A549 (cell line): ENCODE measurements at regions of chr14 and their contacts with region 1.

Region 1: DNA sequence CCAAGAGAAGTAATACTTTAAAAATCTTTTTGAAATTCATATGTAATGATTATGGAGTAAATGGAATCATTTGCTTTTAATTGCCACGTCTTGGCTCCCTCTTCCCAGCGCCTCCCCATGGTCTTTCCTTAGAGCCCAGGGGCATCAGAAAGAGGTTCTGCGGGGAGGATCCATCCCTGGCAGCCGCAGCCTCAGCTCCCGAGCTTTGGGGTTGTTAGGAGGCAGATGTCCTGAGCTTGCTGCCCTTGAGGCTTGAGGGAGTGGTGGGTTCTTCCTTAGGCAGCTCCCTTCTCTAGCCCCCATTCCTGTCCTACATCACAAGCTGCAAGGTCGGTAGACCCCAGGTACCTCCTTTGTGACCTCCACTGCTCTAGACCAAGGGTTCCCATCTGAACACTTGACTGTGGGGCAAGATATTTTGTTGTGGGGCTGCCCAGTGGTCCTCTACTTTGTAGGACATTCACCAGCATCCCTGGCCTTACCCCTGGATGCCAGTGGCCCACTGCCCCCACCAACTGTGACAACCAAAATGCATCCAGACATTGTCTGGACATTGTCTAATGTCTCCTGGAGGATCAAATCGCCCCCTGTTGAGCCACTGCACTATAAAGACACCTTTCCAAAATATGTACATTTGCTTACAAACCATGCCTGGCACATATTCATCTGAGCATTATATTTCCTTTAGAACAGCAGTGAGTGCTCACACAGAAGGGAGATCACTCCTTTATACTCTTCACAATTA is 6.3 kb downstream of the PPP2R5C start:
- DNase-seq: no peak
- ATAC-seq: no peak
- H3K4me3 ChIP-seq: no peak overlapping the region
- H3K27ac ChIP-seq: no peak overlapping the region
- H3K4me1 ChIP-seq: no peaks in the 10 kb centered on the region; the same call in 2 of the 3 replicates
- CTCF ChIP-seq: no peak
- EP300 ChIP-seq: no peak
- POLR2A ChIP-seq: no peak
- RAD21 ChIP-seq: no peak

Region 2: DNA sequence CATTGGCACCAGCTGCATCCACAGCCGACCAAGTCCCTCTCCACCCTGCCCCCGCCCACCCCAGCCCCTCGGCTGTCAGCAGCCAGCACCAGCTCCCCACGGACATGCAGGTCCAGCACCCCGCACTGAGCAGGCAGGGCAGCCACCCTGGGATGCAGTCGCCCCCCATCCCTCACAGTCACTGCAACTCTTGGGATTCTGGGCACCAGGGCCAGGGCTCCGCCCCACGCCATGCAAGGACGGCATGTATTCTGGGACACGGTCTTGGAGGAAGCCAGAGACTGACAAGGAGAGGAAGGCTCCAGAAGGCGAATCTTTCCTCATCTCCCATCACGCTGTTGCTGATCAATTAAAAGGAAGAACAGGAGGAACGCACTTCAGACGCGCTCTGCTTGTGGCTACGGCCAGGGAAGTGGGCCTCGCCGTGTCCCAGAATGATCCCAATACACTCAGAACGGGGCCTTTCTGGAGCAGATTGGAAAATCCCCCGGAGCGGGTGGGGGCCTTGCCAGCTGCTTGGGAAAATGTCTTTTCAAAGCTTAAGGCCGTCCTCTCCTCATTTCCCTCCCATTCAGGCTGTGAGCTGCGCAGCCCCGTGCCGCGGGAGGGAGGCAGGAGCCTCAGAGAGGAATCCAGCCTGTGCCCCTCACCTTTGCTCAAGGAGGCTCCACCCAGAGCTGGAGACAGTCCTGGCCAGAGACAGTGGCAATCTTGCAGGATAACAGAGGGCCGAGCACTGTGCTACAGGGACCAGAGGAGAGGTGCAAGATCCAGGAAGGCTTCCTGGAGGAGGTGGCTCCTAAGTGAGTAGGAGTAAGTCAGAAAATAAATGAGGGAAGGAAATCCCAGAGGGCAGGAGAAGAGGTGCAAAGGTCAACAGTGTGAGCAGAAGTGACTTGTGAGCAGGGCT is 260.6 kb before region 1 on chr14:
- CTCF ChIA-PET with region 1: no interaction called
- POLR2A ChIA-PET with region 1: no interaction called
- DNase-seq: no peak
- ATAC-seq: no peak; a peak in 1 of 6 replicates
- H3K4me3 ChIP-seq: no peak overlapping the region
- H3K27ac ChIP-seq: peak overlapping the region in 1 of 2 experiments; percentile 46; a peak in 2 of 6 replicates
- H3K4me1 ChIP-seq: peaks cover 7% of the 10 kb centered on the region; the same call in 1 of the 3 replicates
- CTCF ChIP-seq: no peak
- EP300 ChIP-seq: no peak
- POLR2A ChIP-seq: no peak
- RAD21 ChIP-seq: no peak

Region 3: GRCh38 chr14:101584055-101584859 is 183.5 kb before region 1 on chr14:
- CTCF ChIA-PET with region 1: no interaction called
- POLR2A ChIA-PET with region 1: no interaction called
- DNase-seq: no peak
- ATAC-seq: no peak
- H3K4me3 ChIP-seq: no peak overlapping the region
- H3K27ac ChIP-seq: no peak overlapping the region
- H3K4me1 ChIP-seq: no peaks in the 10 kb centered on the region
- CTCF ChIP-seq: no peak
- EP300 ChIP-seq: no peak
- POLR2A ChIP-seq: no peak
- RAD21 ChIP-seq: no peak

Region 4: GRCh38 chr14:101654051-101654450 is 113.7 kb before region 1 on chr14:
- CTCF ChIA-PET with region 1: no interaction called
- POLR2A ChIA-PET with region 1: no interaction called
- DNase-seq: no peak
- ATAC-seq: no peak
- H3K4me3 ChIP-seq: no peak overlapping the region
- H3K27ac ChIP-seq: no peak overlapping the region
- H3K4me1 ChIP-seq: no peaks in the 10 kb centered on the region
- CTCF ChIP-seq: no peak
- EP300 ChIP-seq: no peak
- POLR2A ChIP-seq: no peak
- RAD21 ChIP-seq: no peak

Region 5: DNA sequence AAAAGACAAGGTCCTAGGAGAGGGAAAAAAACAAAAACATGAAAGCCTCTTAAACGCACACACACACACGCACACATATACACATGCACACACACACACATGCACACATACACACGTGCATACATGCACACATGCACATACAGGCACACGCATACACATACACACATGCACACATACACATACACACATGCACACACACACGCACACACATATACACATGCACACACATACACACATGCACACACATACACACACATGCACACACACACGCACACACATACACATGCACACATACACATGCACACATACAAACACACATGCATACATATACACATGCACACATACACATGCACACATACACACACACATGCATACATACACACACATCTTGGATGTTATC is 84.4 kb before region 1 on chr14:
- CTCF ChIA-PET with region 1: no interaction called
- POLR2A ChIA-PET with region 1: no interaction called
- DNase-seq: no peak
- ATAC-seq: no peak
- H3K4me3 ChIP-seq: no peak overlapping the region
- H3K27ac ChIP-seq: no peak overlapping the region
- H3K4me1 ChIP-seq: no peaks in the 10 kb centered on the region
- CTCF ChIP-seq: no peak
- EP300 ChIP-seq: no peak
- POLR2A ChIP-seq: no peak
- RAD21 ChIP-seq: no peak

Region 6: DNA sequence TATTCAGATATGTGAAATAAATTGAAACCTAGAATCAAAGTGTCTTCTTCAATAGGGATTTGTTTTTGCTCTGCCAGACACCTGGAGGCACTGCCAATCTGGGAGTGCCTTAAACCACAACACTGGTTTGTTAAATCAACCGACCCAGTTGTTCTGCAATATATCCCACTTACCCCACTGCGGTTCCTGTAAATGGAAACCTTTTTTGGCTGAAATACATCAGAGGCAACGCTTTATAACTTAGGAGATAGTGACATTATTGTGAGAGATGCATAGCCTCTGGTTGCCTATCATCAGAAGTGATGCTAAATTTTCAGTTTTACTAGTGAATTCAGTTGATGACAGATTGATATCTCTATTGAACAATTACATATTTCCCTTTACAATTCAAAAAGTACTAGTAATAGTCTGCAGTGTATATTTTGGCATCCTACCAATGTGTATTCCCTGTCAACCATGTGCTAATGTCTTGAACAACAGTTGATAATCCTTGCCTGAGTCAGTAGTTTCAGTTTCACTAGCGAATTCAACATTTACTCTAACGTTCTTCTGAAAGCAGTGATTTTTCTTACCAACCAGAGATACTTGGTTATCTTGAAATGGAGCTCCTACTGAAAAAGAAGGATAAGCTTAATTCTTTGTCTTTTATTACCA is 24.3 kb after region 1 on chr14:
- CTCF ChIA-PET with region 1: interaction called, 16 read pairs
- POLR2A ChIA-PET with region 1: no interaction called
- DNase-seq: no peak
- ATAC-seq: no peak
- H3K4me3 ChIP-seq: no peak overlapping the region
- H3K27ac ChIP-seq: no peak overlapping the region
- H3K4me1 ChIP-seq: no peaks in the 10 kb centered on the region; the same call in 2 of the 3 replicates
- CTCF ChIP-seq: no peak
- EP300 ChIP-seq: no peak
- POLR2A ChIP-seq: no peak
- RAD21 ChIP-seq: no peak

Region 7: DNA sequence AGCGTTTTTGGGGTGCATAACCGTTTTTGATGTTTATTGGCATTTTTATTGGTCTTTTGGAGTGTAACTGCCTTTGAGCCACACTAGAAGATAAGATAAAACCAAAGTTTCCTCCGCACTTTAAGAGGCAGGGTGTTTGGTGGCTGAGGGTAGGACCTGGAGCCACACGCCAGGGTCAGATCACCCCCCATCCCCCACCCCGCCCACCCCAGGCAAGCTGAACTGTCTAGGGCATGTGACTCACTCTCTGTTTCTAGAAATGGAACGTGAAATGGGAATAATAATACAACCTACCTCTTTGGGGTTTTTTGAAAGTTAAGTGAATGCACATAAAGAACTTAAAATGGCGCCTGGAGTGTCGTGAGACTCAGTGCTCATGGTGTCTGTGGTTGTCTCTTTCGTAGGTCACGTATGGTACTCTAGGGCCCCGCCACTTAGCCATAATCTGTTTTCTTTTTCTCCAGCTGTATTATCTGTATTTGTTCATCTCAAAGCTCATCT is 49.8 kb after region 1 on chr14:
- CTCF ChIA-PET with region 1: interaction called, 25 read pairs
- POLR2A ChIA-PET with region 1: interaction called, 3 read pairs
- DNase-seq: no peak
- ATAC-seq: no peak
- H3K4me3 ChIP-seq: no peak overlapping the region
- H3K27ac ChIP-seq: no peak overlapping the region
- H3K4me1 ChIP-seq: peaks cover 18% of the 10 kb centered on the region
- CTCF ChIP-seq: no peak
- EP300 ChIP-seq: no peak
- POLR2A ChIP-seq: no peak
- RAD21 ChIP-seq: no peak

Region 8: DNA sequence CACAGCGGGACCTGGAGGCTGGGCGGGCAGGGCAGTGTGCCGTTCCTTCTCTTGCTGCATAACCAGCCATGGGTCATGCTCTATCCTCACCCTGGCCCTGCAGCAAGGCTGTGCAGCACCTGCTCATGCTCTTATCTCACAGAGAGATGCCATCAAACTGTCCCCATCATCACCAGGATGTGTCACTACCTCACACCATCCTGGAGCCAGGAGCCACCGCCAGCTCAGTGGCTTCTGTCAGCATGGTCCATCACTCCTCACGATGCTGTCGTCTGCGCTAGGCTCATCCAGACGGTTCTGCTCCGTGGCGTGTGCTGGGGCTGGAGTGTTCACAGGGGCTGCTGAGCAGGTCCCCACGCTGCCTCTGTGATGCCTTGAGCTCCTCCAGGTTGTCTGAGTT is 119.4 kb after region 1 on chr14:
- CTCF ChIA-PET with region 1: interaction called, 13 read pairs
- POLR2A ChIA-PET with region 1: no interaction called
- DNase-seq: no peak
- ATAC-seq: no peak
- H3K4me3 ChIP-seq: no peak overlapping the region
- H3K27ac ChIP-seq: no peak overlapping the region
- H3K4me1 ChIP-seq: no peaks in the 10 kb centered on the region
- CTCF ChIP-seq: no peak
- EP300 ChIP-seq: no peak
- POLR2A ChIP-seq: no peak
- RAD21 ChIP-seq: no peak

Region 9: DNA sequence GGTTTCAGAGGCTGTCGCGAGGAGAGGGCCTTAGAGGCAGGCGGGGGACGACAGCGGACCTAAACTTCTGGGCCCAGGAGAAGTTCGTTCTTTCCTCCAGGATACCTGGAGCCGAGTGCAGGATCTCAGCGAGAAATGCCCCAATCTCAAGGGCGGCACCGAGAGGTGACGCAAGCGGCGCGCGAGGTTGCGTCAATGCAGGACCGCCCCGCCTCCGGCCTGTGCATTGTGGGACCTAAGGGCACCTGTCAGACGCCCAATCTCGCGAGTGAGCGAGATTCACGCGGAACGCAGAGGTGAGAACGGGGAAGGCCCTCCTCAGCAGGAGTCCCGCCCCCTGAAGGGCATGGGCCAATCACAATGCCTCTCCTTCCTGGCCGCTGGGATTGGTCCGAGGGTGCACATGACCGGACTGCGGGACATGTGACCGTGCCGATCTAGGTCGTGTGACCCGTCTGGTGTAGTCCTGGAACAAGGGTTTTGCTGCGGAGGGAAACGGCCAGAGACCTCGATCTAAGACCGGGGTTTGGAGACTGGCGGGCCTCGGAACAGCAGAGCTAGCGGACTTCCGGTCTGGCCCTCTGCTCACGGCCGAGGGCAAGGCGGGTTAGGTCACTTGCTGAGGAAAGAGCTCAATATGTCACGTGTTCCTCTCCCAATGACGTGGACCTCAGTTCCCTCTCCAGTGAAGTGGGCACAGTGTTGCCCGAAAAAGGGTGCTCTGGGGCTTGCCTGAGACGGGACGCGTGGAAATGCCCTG is 180.3 kb after region 1 on chr14:
- CTCF ChIA-PET with region 1: interaction called, 59 read pairs
- POLR2A ChIA-PET with region 1: interaction called, 3 read pairs
- DNase-seq: peak; percentile 98 to 100
- ATAC-seq: peak; percentile 98 to 99
- H3K4me3 ChIP-seq: peak overlapping the region; percentile 82
- H3K27ac ChIP-seq: peak overlapping the region; percentile 86 to 96
- H3K4me1 ChIP-seq: peaks cover 11% of the 10 kb centered on the region; the same call in 1 of the 3 replicates
- CTCF ChIP-seq: no peak
- EP300 ChIP-seq: no peak
- POLR2A ChIP-seq: peak; percentile 90
- RAD21 ChIP-seq: no peak